Calu3 (cell line): ENCODE measurements at regions of chr12 and their contacts with region 1.

Region 1: GRCh38 chr12:111405149-111405860 is 418 bp upstream of the SH2B3 start:
- DNase-seq: peak; percentile 98
- H3K4me3 Mint-ChIP-seq: peak overlapping the region; percentile 86
- H3K27ac Mint-ChIP-seq: peak overlapping the region; percentile 83
- H3K4me1 Mint-ChIP-seq: peaks cover 61% of the 10 kb centered on the region
- H3K27me3 Mint-ChIP-seq: no peaks in the 10 kb centered on the region
- CTCF ChIP-seq: peak; percentile 55

Region 2: GRCh38 chr12:111451649-111452129 is 46.4 kb after region 1 on chr12:
- CTCF ChIA-PET with region 1: interaction called, 33 read pairs
- intact Hi-C with region 1: loop called (anchors 1 kb)
- DNase-seq: peak; percentile 34
- H3K4me3 Mint-ChIP-seq: no peak overlapping the region
- H3K27ac Mint-ChIP-seq: no peak overlapping the region
- H3K4me1 Mint-ChIP-seq: no peaks in the 10 kb centered on the region
- H3K27me3 Mint-ChIP-seq: no peaks in the 10 kb centered on the region
- CTCF ChIP-seq: peak; percentile 67